ENCODE measurements at regions of chr5 and their contacts with region 1.

Region 1: DNA sequence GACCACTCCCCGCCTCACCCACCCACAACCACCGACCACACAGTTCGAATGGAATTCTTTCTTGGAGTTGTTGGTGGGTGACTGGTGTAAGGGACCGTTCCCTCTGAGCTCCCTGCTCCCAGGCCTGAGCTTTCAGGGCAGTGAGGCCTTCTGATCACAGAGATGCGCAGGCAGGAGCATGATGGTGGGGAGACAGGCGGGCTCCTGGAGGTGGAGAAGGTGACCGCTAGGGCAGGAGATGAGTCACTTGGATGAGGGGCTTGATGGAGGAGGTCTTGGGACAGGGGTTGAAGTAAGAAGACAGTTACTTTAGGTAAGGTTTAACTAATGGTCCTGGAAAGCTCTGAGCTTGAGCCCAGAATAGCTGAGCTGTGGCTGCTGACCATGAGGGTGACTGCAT is 88.5 kb downstream of the HSPA4 start:
- DNase-seq: no peak
- H3K4me3 ChIP-seq: no peak overlapping the region
- H3K27ac ChIP-seq: no peak overlapping the region
- H3K4me1 ChIP-seq: no peaks in the 10 kb centered on the region
- H3K27me3 ChIP-seq: no peaks in the 10 kb centered on the region
- CTCF ChIP-seq: no peak

Region 2: DNA sequence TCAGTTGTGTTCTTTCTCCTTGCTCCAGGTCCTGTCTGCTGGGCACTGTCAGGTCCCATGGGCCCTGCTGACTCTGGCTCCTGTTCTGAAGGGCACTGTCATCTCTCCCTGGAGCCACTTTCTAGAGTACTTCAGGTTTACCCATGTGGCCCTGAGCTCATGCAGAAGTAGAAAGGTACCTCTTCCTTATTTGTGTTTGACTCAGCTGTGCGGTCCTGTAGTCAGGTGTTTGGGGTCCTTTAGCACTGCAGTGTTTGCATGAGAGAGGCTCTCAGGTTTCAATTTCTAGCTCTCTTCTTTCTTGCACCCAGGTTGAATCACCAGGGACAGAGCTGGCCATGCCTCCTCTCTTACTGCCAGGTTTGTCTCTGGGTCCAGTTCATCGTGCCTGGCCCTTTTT is 17.0 kb before region 1 on chr5:
- CTCF ChIA-PET with region 1: no interaction called
- dilution Hi-C with region 1: no loop called
- in situ Hi-C with region 1: no loop called
- intact Hi-C with region 1: no loop called
- DNase-seq: no peak
- H3K4me3 ChIP-seq: no peak overlapping the region
- H3K27ac ChIP-seq: no peak overlapping the region
- H3K4me1 ChIP-seq: no peaks in the 10 kb centered on the region
- H3K27me3 ChIP-seq: no peaks in the 10 kb centered on the region
- CTCF ChIP-seq: no peak

Region 3: DNA sequence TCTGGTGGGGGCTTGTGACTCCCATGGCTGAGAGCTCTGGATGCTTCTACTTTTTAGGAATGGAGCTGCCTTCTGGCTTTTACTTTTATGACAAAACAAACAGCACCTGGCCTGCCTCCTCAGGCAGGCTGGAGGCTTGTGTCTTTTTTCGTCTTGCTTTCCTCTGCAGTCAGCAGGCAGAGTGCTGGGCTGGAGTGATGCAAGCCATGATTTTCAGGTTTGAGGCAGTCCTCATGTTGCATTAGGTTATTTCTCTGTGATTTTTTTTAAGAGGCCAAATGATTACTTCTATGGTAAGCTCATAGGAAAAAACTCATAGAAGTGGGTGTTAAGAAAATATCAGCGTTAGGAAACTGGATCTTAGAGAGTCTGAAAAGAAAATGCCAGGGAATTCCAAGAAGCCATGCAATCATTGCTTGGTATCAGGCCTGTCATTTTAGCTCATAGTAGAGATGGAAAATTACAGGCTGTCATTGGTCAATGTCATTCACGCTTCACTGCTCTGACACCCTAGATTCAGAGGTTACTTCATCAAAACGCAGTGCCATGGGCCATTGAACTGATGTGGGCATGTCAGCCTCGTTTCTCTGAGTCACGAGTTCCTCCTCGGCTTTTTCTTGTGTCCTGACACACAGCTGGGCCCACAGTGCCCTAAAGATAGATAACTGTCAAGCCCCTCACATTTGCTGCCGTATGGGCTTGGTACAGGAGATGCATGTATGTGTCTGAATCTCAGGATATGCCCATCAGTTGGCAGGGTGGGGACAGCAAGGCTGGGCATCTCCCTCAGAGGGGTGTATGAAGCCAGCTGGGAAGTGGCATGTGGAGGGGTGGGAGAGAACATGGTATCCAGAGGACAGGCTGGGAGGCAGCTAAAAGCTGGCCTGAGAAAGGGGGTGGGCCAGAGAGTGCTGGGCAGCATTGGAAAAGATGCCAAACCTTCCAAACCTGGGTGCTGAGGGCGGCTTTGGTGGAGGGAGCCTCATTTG is 63.3 kb after region 1 on chr5:
- CTCF ChIA-PET with region 1: no interaction called
- dilution Hi-C with region 1: no loop called
- in situ Hi-C with region 1: no loop called
- intact Hi-C with region 1: no loop called
- DNase-seq: no peak
- H3K4me3 ChIP-seq: no peak overlapping the region
- H3K27ac ChIP-seq: no peak overlapping the region
- H3K4me1 ChIP-seq: no peaks in the 10 kb centered on the region
- H3K27me3 ChIP-seq: no peaks in the 10 kb centered on the region
- CTCF ChIP-seq: no peak

Region 4: GRCh38 chr5:133344266-133344665 is 204.0 kb after region 1 on chr5:
- CTCF ChIA-PET with region 1: interaction called, 10 read pairs
- dilution Hi-C with region 1: no loop called
- in situ Hi-C with region 1: no loop called
- intact Hi-C with region 1: no loop called
- DNase-seq: peak; percentile 13
- H3K4me3 ChIP-seq: no peak overlapping the region
- H3K27ac ChIP-seq: no peak overlapping the region
- H3K4me1 ChIP-seq: peaks cover 9% of the 10 kb centered on the region
- H3K27me3 ChIP-seq: no peaks in the 10 kb centered on the region
- CTCF ChIP-seq: no peak